MCF 10A (cell line): ENCODE measurements at regions of chr1 and their contacts with region 1.

Region 1: DNA sequence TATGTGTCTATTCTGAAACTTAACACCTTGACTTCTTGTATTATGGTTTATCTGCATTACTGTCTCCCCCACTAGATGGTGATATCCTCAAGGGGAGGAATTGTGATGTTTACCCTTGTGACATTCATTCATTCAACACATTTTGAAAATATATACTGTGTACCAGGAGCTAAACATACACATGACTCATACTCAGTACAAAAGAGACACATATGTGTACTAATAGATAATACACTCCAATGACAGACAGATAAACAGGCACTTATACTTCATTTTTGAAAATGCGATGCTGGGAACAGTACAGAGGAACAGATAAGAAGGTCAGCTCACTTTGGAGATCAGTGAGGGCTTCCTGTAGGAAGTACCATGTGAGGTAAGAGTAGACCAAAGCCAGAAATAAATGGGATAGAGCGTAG is 8.9 kb upstream of the RAB3GAP2 start:
- DNase-seq: peak; percentile 77
- H3K4me3 Mint-ChIP-seq: no peak overlapping the region
- H3K27ac Mint-ChIP-seq: no peak overlapping the region
- H3K4me1 Mint-ChIP-seq: no peaks in the 10 kb centered on the region
- H3K27me3 Mint-ChIP-seq: peaks cover 13% of the 10 kb centered on the region
- CTCF ChIP-seq: peak; percentile 93

Region 2: DNA sequence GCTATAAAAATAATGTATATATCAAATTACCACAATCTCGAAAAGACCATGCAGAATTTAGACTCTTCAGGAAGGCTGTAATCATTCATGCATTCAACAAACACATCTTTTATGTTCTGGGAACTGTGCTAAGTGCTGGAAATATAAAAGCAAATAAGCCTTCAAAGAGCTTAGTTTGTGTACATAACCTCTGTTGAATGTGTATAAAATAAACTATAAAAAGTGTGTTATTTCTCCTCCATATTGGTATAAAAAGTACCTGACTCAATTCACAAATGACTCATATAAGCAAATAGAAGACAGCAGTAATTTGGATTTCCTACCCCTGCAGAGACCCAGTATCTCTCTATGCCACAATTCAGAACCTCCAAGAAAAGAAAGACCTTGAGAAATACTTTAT is 45.7 kb before region 1 on chr1:
- CTCF ChIA-PET with region 1: interaction called, 19 read pairs
- POLR2A ChIA-PET with region 1: no interaction called
- intact Hi-C with region 1: no loop called
- DNase-seq: peak; percentile 17
- H3K4me3 Mint-ChIP-seq: no peak overlapping the region
- H3K27ac Mint-ChIP-seq: no peak overlapping the region
- H3K4me1 Mint-ChIP-seq: peaks cover 6% of the 10 kb centered on the region
- H3K27me3 Mint-ChIP-seq: no peaks in the 10 kb centered on the region
- CTCF ChIP-seq: no peak

Region 3: DNA sequence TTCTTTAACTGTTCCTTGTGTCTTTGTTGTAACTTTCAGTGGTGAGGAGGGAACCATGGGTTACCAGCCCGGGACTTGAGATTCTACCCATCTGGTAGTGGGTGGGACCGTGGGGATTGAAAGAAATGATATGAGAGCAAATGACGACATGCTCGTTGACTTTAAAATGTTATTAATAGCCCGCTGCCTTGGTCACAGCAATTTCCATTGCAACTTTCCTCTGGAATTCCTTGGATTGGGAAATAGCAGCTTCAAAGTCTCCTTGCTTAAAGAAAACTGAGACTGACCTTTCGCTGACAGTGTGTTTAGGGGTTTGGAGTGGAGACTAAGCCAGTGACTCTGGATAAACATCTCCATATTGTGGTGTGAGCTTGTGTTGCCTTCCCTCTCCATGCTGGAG is 202.5 kb after region 1 on chr1:
- CTCF ChIA-PET with region 1: interaction called, 13 read pairs
- POLR2A ChIA-PET with region 1: no interaction called
- intact Hi-C with region 1: no loop called
- DNase-seq: no peak
- H3K4me3 Mint-ChIP-seq: no peak overlapping the region
- H3K27ac Mint-ChIP-seq: no peak overlapping the region
- H3K4me1 Mint-ChIP-seq: peaks cover 4% of the 10 kb centered on the region
- H3K27me3 Mint-ChIP-seq: no peaks in the 10 kb centered on the region
- CTCF ChIP-seq: no peak

Region 4: GRCh38 chr1:220655509-220655908 is 374.3 kb after region 1 on chr1:
- CTCF ChIA-PET with region 1: interaction called, 14 read pairs
- POLR2A ChIA-PET with region 1: no interaction called
- intact Hi-C with region 1: no loop called
- DNase-seq: no peak
- H3K4me3 Mint-ChIP-seq: no peak overlapping the region
- H3K27ac Mint-ChIP-seq: no peak overlapping the region
- H3K4me1 Mint-ChIP-seq: no peaks in the 10 kb centered on the region
- H3K27me3 Mint-ChIP-seq: no peaks in the 10 kb centered on the region
- CTCF ChIP-seq: no peak

Region 5: GRCh38 chr1:220700556-220701179 is 419.5 kb after region 1 on chr1:
- CTCF ChIA-PET with region 1: interaction called, 15 read pairs
- POLR2A ChIA-PET with region 1: no interaction called
- intact Hi-C with region 1: no loop called
- DNase-seq: peak; percentile 28
- H3K4me3 Mint-ChIP-seq: no peak overlapping the region
- H3K27ac Mint-ChIP-seq: no peak overlapping the region
- H3K4me1 Mint-ChIP-seq: no peaks in the 10 kb centered on the region
- H3K27me3 Mint-ChIP-seq: no peaks in the 10 kb centered on the region
- CTCF ChIP-seq: no peak

Region 6: GRCh38 chr1:220761688-220762427 is 480.7 kb after region 1 on chr1:
- CTCF ChIA-PET with region 1: interaction called, 18 read pairs
- POLR2A ChIA-PET with region 1: no interaction called
- intact Hi-C with region 1: no loop called
- DNase-seq: no peak
- H3K4me3 Mint-ChIP-seq: no peak overlapping the region
- H3K27ac Mint-ChIP-seq: no peak overlapping the region
- H3K4me1 Mint-ChIP-seq: no peaks in the 10 kb centered on the region
- H3K27me3 Mint-ChIP-seq: peaks cover 6% of the 10 kb centered on the region
- CTCF ChIP-seq: no peak

Region 7: GRCh38 chr1:220810179-220810653 is 529.0 kb after region 1 on chr1:
- CTCF ChIA-PET with region 1: interaction called, 15 read pairs
- POLR2A ChIA-PET with region 1: no interaction called
- intact Hi-C with region 1: no loop called
- DNase-seq: peak; percentile 91
- H3K4me3 Mint-ChIP-seq: no peak overlapping the region
- H3K27ac Mint-ChIP-seq: no peak overlapping the region
- H3K4me1 Mint-ChIP-seq: no peaks in the 10 kb centered on the region
- H3K27me3 Mint-ChIP-seq: no peaks in the 10 kb centered on the region
- CTCF ChIP-seq: peak; percentile 99